Heart right ventricle (tissue), 16 donors: ENCODE measurements at regions of chr2 and their contacts with region 1.

Region 1: GRCh38 chr2:128090945-128091725 is at the start of gene UGGT1:
- DNase-seq: peak; percentile 92 to 95
- ATAC-seq: peak; percentile 99 to 100 (median 100)
- H3K4me3 ChIP-seq: peak within 1 kb of the TSS; percentile 68 to 99 (median 82)
- H3K27ac ChIP-seq: peak within 1 kb of the TSS; percentile 67 to 92 (median 88)
- H3K4me1 ChIP-seq: peaks cover 0 to 39% (median 25%) of the 10 kb centered on the region in 9 donors
- H3K27me3 ChIP-seq: no peaks in the 10 kb centered on the region
- CTCF ChIP-seq: no peak
- total RNA-seq, gene UGGT1: 22.3 to 44.0 (median 28.8) TPM

Region 2: DNA sequence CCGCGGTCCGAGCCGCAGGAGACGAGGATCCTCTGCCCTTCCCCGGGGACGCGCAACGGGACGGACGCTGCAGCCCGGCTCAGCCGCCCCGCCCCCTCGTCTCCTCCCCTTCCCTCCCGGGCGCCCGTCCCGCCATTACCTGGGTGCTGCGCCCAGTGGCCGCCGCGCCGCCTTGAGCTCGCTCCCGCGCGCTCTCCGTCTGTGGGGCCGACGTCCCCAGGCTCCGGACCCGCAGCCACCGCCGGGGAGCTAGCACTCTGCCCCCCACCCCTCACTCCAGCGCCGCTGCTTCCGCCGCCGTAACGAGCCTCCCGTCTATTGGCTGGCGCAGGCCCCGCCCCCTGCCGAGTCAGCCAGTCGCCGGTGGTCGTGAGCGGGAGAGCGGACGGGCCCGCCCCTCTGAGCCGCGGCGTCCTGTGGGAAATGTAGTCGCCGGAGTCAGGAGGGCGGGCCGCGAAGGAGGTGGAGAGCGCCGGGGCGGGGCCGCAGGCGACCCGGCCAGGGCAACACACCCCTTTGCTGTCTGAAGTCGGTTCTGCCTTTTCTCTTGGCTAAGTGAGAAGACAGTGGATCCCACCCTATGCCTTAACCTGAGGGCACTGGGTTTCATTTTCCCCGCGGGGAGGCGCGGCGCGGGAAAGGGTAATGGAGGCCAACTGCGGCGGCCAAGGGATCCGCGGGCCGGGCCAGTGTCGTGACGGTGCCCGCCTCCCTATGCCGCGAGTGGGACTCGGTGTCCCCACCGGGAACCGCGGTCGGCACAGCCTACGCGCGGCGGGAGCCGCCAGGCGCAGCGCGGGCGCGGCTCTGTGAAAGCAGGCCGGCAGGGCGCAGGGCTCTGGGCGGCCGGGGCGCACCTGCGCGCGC is 63.1 kb before region 1 on chr2 and contains the start of gene SAP130:
- intact Hi-C with region 1: loop called in 7 of 10 experiments (anchors 1 to 5 kb)
- DNase-seq: peak; percentile 98 to 99
- ATAC-seq: peak; percentile 91 to 96 (median 92)
- H3K4me3 ChIP-seq: peak within 1 kb of the TSS; percentile 82 to 99 (median 97)
- H3K27ac ChIP-seq: peak within 1 kb of the TSS; percentile 92 to 99 (median 96)
- H3K4me1 ChIP-seq: peaks cover 8 to 20% (median 16%) of the 10 kb centered on the region in 9 donors
- H3K27me3 ChIP-seq: no peaks in the 10 kb centered on the region
- CTCF ChIP-seq: peak in 2 of 9 donors; percentile 7 to 19
- total RNA-seq, gene SAP130: 12.4 to 20.4 (median 17.3) TPM